Activated CD4-positive, alpha-beta memory T cell treated with anti-CD3 and anti-CD28 coated beads for 36 hours (primary cell): ENCODE measurements at regions of chrX and their contacts with region 1.

Region 1: GRCh38 chrX:71671043-71671780 is 3.9 kb downstream of the LOC101059915 start:
- DNase-seq: peak; percentile 82
- H3K4me3 Mint-ChIP-seq: peak overlapping the region; percentile 12
- H3K27ac Mint-ChIP-seq: no peak overlapping the region
- H3K4me1 Mint-ChIP-seq: peaks cover 21% of the 10 kb centered on the region
- H3K27me3 Mint-ChIP-seq: no peaks in the 10 kb centered on the region

Region 2: DNA sequence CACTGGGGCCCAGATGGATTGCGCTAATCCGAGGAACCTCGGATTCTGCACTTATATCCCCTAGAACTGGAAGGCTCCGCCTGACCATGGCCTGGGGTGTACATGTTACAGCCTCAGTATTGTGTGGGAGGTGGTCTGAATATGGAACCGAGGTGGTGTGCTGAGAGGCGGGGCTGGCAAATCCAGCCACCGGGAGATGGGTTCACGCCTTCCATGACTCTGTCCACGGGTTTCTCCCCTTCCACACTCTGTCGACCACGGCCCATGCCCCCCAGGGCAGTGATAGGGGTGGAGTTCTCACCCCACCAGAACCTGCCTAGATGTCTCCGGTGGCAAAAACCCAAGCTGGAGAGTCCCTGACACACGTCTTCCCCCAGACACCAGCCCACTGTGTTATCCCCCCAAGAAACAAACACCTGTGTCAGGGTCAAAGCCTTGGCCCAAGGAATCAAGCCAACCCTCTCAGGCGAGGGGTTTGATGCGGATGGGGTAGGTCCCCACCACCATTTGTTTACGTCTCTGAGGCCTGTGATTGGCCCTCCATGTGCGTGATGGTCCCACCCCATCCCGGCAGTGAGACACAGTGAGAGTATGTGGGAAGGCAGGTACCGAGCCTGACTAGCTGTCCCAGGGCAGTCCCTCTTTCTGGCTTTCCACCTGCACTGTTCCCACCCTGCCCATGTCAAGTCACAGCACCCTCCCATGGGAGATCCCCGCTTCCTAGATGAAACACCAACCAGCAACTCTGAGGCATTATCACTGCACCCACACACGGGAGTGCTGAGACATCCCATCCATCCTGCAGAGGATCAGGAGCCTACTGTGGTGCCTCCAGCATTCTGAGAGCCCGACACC is 10.4 kb before region 1 on chrX:
- CTCF ChIA-PET with region 1: no interaction called
- POLR2A ChIA-PET with region 1: no interaction called
- intact Hi-C with region 1: no loop called
- DNase-seq: no peak
- H3K4me3 Mint-ChIP-seq: no peak overlapping the region
- H3K27ac Mint-ChIP-seq: no peak overlapping the region
- H3K4me1 Mint-ChIP-seq: peaks cover 20% of the 10 kb centered on the region
- H3K27me3 Mint-ChIP-seq: no peaks in the 10 kb centered on the region

Region 3: GRCh38 chrX:71859637-71860036 is 188.4 kb after region 1 on chrX:
- CTCF ChIA-PET with region 1: interaction called, 20 read pairs
- POLR2A ChIA-PET with region 1: no interaction called
- intact Hi-C with region 1: loop called (anchors 1 kb)
- DNase-seq: peak; percentile 31
- H3K4me3 Mint-ChIP-seq: no peak overlapping the region
- H3K27ac Mint-ChIP-seq: no peak overlapping the region
- H3K4me1 Mint-ChIP-seq: no peaks in the 10 kb centered on the region
- H3K27me3 Mint-ChIP-seq: peaks cover 12% of the 10 kb centered on the region